ENCODE measurements at regions of chr13 and their contacts with region 1.

Region 1: GRCh38 chr13:94327318-94327717 is 152.2 kb downstream of the DCT start:
- DNase-seq: peak in 6 of 9 donors; percentile 32 to 53 (median 43)
- ATAC-seq: peak; percentile 34
- H3K4me3 ChIP-seq: peak overlapping the region; percentile 11
- H3K4me3 Mint-ChIP-seq: peak overlapping the region; percentile 21 to 84 (median 73)
- H3K27ac ChIP-seq: no peak overlapping the region
- H3K27ac Mint-ChIP-seq: peak overlapping the region; percentile 0 to 88 (median 34)
- H3K4me1 ChIP-seq: peaks cover 64 to 88% of the 10 kb centered on the region in 2 donors
- H3K4me1 Mint-ChIP-seq: peaks cover 44 to 98% (median 88%) of the 10 kb centered on the region in 7 donors
- H3K27me3 ChIP-seq: peaks cover 0 to 4% of the 10 kb centered on the region in 2 donors
- H3K27me3 Mint-ChIP-seq: peaks cover 5 to 28% (median 15%) of the 10 kb centered on the region in 5 donors

Region 2: DNA sequence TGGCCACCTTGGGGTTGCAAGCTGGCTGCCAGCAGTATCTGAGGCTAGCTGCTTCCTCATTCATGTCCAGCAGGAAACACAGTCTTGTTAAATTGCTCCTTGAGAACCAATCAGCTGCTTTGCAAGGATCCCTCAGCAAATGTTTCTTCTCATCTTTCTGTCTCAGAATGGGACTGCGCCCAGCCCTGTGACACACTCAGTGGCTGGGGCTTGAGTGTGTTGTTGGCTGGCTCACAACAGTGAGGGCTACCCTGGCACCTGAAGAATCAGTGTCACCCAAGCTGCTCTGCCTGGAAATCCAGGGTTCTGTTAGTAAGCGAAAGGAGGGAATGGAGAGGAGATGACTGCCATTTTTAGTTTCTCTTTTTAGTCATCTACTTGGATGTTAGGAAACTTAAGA is 165.0 kb before region 1 on chr13:
- CTCF ChIA-PET with region 1: no interaction called
- POLR2A ChIA-PET with region 1: no interaction called
- intact Hi-C with region 1: no loop called
- DNase-seq: no peak
- ATAC-seq: no peak
- H3K4me3 ChIP-seq: no peak overlapping the region
- H3K4me3 Mint-ChIP-seq: no peak overlapping the region
- H3K27ac ChIP-seq: no peak overlapping the region
- H3K27ac Mint-ChIP-seq: no peak overlapping the region
- H3K4me1 ChIP-seq: no peaks in the 10 kb centered on the region
- H3K4me1 Mint-ChIP-seq: no peaks in the 10 kb centered on the region
- H3K27me3 ChIP-seq: no peaks in the 10 kb centered on the region
- H3K27me3 Mint-ChIP-seq: peaks cover 0 to 11% (median 0%) of the 10 kb centered on the region in 5 donors

Region 3: GRCh38 chr13:94280349-94280748 is 47.0 kb before region 1 on chr13:
- CTCF ChIA-PET with region 1: no interaction called
- POLR2A ChIA-PET with region 1: interaction called, 3 read pairs
- intact Hi-C with region 1: loop called in 1 of 2 experiments (anchors 5 kb)
- DNase-seq: no peak
- ATAC-seq: no peak
- H3K4me3 ChIP-seq: no peak overlapping the region
- H3K4me3 Mint-ChIP-seq: no peak overlapping the region
- H3K27ac ChIP-seq: no peak overlapping the region
- H3K27ac Mint-ChIP-seq: no peak overlapping the region
- H3K4me1 ChIP-seq: no peaks in the 10 kb centered on the region
- H3K4me1 Mint-ChIP-seq: no peaks in the 10 kb centered on the region
- H3K27me3 ChIP-seq: peaks cover 0 to 3% of the 10 kb centered on the region in 2 donors
- H3K27me3 Mint-ChIP-seq: peaks cover 0 to 20% (median 17%) of the 10 kb centered on the region in 5 donors

Region 4: GRCh38 chr13:94345374-94346195 is 18.3 kb after region 1 on chr13:
- CTCF ChIA-PET with region 1: interaction called, 5 read pairs
- POLR2A ChIA-PET with region 1: no interaction called
- intact Hi-C with region 1: loop called (anchors 1 kb)
- DNase-seq: peak in 7 of 9 donors; percentile 23 to 63 (median 48)
- ATAC-seq: peak; percentile 73
- H3K4me3 ChIP-seq: no peak overlapping the region
- H3K4me3 Mint-ChIP-seq: peak overlapping the region in 1 of 10 donors; percentile 40
- H3K27ac ChIP-seq: no peak overlapping the region
- H3K27ac Mint-ChIP-seq: no peak overlapping the region
- H3K4me1 ChIP-seq: no peaks in the 10 kb centered on the region
- H3K4me1 Mint-ChIP-seq: peaks cover 4 to 18% (median 8%) of the 10 kb centered on the region in 7 donors
- H3K27me3 ChIP-seq: no peaks in the 10 kb centered on the region
- H3K27me3 Mint-ChIP-seq: peaks cover 0 to 12% (median 0%) of the 10 kb centered on the region in 5 donors

Region 5: DNA sequence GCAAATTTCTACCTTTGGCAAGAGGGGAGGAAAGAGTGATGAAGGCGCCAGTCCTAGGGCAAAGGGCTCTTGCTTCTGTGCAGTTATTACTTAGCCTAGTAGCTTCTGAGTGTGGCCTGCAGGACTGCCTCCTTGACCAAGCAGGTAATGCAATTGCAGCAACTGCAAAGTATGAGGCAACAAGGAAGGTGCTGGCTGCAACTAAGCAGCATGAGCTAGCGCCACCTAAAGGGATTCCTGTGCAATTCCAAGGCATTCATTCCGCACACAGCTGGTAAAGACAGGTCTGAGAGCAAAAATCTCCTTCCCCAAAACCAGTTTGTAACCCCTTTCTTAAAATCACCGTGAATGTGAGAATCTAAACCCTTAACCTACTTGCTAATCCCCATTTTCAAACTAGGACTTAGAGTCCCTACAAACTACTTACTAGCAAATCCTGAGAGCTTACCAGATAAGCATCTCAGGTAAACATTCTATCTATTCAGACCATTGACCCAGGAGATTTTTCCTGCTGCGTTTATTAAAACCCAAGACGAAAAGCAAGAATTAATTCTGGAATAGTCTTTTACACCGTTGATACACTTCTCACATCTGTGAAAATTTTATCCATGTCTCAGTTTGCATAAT is 89.2 kb after region 1 on chr13:
- CTCF ChIA-PET with region 1: no interaction called
- POLR2A ChIA-PET with region 1: interaction called, 3 read pairs
- intact Hi-C with region 1: loop called in 1 of 2 experiments (anchors 5 kb)
- DNase-seq: no peak
- ATAC-seq: no peak
- H3K4me3 ChIP-seq: no peak overlapping the region
- H3K4me3 Mint-ChIP-seq: no peak overlapping the region
- H3K27ac ChIP-seq: no peak overlapping the region
- H3K27ac Mint-ChIP-seq: no peak overlapping the region
- H3K4me1 ChIP-seq: peaks cover 0 to 15% of the 10 kb centered on the region in 2 donors
- H3K4me1 Mint-ChIP-seq: peaks cover 9 to 29% (median 27%) of the 10 kb centered on the region in 7 donors
- H3K27me3 ChIP-seq: no peaks in the 10 kb centered on the region
- H3K27me3 Mint-ChIP-seq: peaks cover 0 to 15% (median 5%) of the 10 kb centered on the region in 5 donors

Region 6: GRCh38 chr13:94549232-94550061 is 222.1 kb after region 1 on chr13:
- CTCF ChIA-PET with region 1: no interaction called
- POLR2A ChIA-PET with region 1: interaction called, 3 read pairs
- intact Hi-C with region 1: loop called (anchors 2 to 5 kb)
- DNase-seq: peak; percentile 81 to 95 (median 92)
- ATAC-seq: peak; percentile 94
- H3K4me3 ChIP-seq: peak overlapping the region; percentile 88
- H3K4me3 Mint-ChIP-seq: peak overlapping the region; percentile 88 to 100 (median 94)
- H3K27ac ChIP-seq: peak overlapping the region; percentile 95
- H3K27ac Mint-ChIP-seq: peak overlapping the region; percentile 96 to 100 (median 99)
- H3K4me1 ChIP-seq: peaks cover 8 to 14% of the 10 kb centered on the region in 2 donors
- H3K4me1 Mint-ChIP-seq: peaks cover 15 to 44% (median 30%) of the 10 kb centered on the region in 7 donors
- H3K27me3 ChIP-seq: no peaks in the 10 kb centered on the region
- H3K27me3 Mint-ChIP-seq: peaks cover 0 to 16% (median 5%) of the 10 kb centered on the region in 5 donors